ENCODE measurements at regions of chr3 and their contacts with region 1.

Region 1: DNA sequence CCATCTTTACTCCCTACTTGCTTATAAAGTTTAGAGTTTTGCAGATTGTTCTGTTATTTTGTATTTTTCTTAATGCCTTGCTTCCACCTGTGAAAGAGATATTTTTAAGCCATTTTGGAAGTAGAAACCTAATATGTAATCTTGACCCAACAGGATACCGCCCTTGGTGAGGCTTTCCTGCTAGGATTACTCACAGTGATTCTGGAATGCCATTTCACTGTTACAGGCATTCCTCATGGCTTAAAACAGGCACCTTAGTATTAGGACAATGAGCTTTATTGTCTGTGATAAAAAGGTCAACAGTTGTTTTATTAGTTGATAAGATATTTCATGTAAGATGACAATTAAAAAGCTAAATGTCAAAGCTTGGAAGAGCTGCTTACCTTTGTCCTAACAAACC is 58.2 kb downstream of the PHLDB2 start:
- DNase-seq: peak; percentile 46 to 61
- ATAC-seq: peak; percentile 65 to 78; a peak in 5 of 6 replicates
- H3K4me3 ChIP-seq: no peak overlapping the region
- H3K27ac ChIP-seq: peak overlapping the region; percentile 29 to 44; a peak in 3 of 6 replicates
- H3K4me1 ChIP-seq: peaks cover 70% of the 10 kb centered on the region
- CTCF ChIP-seq: no peak
- EP300 ChIP-seq: peak in 1 of 2 experiments; percentile 47; a peak in 1 of 5 replicates
- POLR2A ChIP-seq: no peak
- RAD21 ChIP-seq: no peak

Region 2: GRCh38 chr3:111803123-111803593 is 114.1 kb before region 1 on chr3:
- CTCF ChIA-PET with region 1: no interaction called
- POLR2A ChIA-PET with region 1: no interaction called
- DNase-seq: peak; percentile 43 to 93
- ATAC-seq: peak; percentile 93
- H3K4me3 ChIP-seq: no peak overlapping the region; the same call in 2 of the 3 replicates
- H3K27ac ChIP-seq: peak overlapping the region; percentile 89 to 97
- H3K4me1 ChIP-seq: peaks cover 59% of the 10 kb centered on the region
- CTCF ChIP-seq: no peak
- EP300 ChIP-seq: peak; percentile 50 to 81; a peak in 3 of 5 replicates
- POLR2A ChIP-seq: no peak
- RAD21 ChIP-seq: peak in 1 of 2 experiments; percentile 44; a peak in 3 of 5 replicates

Region 3: DNA sequence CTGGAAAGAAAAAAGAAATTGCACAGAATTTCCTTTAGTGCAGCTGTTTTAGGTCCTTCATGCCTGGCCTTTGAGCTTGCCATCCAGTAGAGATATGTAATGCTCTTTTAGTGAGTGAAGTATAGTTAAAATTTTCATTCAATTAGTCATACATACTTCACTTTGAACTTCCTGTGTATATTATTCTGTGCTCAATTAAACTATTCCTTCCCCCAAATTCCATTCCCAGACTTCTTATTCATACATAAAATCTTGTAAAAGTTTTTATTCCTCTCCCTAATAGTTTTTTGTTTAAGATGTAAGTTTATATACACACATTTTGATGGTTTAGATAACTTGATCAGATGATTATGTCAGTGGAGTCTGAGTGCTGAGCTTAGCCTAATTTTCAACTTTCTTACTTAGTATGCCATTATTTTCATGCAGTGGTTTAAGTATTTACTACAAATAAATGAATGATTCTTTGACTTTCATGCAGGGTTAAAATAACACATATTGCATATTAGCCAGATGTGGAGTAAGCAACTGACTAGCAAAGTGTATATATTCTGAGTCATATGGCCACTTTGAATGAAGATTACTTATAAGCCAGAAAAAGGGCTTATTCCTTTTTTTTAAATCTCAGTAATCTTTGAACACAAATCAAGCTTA is 19.0 kb after region 1 on chr3:
- CTCF ChIA-PET with region 1: interaction called, 3 read pairs
- POLR2A ChIA-PET with region 1: interaction called, 11 read pairs
- DNase-seq: peak; percentile 40 to 48
- ATAC-seq: peak; percentile 91 to 93
- H3K4me3 ChIP-seq: no peak overlapping the region
- H3K27ac ChIP-seq: peak overlapping the region; percentile 58 to 88
- H3K4me1 ChIP-seq: peaks cover 49% of the 10 kb centered on the region
- CTCF ChIP-seq: no peak
- EP300 ChIP-seq: peak; percentile 39 to 44; a peak in 2 of 5 replicates
- POLR2A ChIP-seq: no peak
- RAD21 ChIP-seq: no peak; a peak in 1 of 5 replicates

Region 4: GRCh38 chr3:112097378-112097777 is 180.1 kb after region 1 on chr3:
- CTCF ChIA-PET with region 1: no interaction called
- POLR2A ChIA-PET with region 1: no interaction called
- DNase-seq: peak; percentile 81 to 94
- ATAC-seq: peak; percentile 91 to 95
- H3K4me3 ChIP-seq: no peak overlapping the region
- H3K27ac ChIP-seq: peak overlapping the region; percentile 29 to 51; a peak in 3 of 6 replicates
- H3K4me1 ChIP-seq: peaks cover 47% of the 10 kb centered on the region
- CTCF ChIP-seq: no peak
- EP300 ChIP-seq: no peak; a peak in 1 of 5 replicates
- POLR2A ChIP-seq: no peak
- RAD21 ChIP-seq: 0 out of 5 replicates have a peak, but pooled peaks of 1 of the 2 experiments have one; percentile 2